Activated CD8-positive, alpha-beta T cell treated with anti-CD3 and anti-CD28 coated beads for 36 hours (primary cell): ENCODE measurements at regions of chr2 and their contacts with region 1.

Region 1: DNA sequence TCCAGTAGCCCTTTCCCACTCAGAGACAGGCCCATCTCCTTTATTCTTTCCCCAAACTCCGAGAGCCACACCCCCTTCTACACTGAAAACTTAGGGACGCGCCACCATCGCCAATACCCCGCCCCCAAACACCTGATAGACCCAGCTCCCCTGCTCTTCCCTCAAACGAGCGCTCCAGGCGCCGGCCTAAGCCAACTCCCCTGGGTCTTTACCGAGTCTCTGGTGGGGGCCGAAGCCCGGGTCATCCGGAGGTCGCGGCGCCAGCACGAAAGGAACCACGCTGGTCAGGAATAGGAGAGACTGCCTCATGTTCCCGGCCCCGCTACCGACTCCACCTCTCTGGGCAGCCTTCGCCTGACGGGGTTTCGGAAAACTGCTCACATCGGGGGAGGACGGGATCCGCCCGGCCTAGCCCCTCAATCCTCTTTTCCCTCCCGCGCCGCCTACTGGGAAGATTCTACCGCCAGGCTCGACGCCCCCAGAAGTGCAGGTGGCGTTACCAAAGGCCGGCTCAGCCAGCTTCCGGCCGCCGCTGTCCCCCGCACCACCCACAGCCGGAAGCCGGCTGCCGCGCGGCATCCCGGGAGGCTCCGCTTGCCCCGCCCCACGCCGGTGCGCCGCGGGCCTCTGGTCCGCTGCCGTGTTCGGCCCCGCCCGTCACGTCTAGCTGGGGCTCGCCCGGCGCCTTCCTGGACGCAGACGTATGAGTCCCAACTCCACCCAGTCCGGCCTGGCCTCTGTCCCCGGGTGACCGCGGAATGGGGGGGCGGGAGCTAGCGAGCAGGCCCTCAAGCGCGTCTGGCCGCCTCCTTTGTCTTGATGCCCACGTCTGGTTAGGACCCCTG is at the start of gene ADAM17:
- DNase-seq: peak; percentile 88
- ATAC-seq: peak; percentile 90
- H3K4me3 Mint-ChIP-seq: peak within 1 kb of the TSS; percentile 87
- H3K27ac Mint-ChIP-seq: peak within 1 kb of the TSS; percentile 96
- H3K4me1 Mint-ChIP-seq: peaks cover 47% of the 10 kb centered on the region
- H3K27me3 Mint-ChIP-seq: no peaks in the 10 kb centered on the region
- CTCF ChIP-seq: no peak
- total RNA-seq, gene ADAM17: 14.2 to 15.9 TPM

Region 2: GRCh38 chr2:9326975-9327374 is 228.5 kb before region 1 on chr2:
- CTCF ChIA-PET with region 1: no interaction called
- POLR2A ChIA-PET with region 1: no interaction called
- intact Hi-C with region 1: no loop called
- DNase-seq: no peak
- ATAC-seq: no peak
- H3K4me3 Mint-ChIP-seq: no peak overlapping the region
- H3K27ac Mint-ChIP-seq: no peak overlapping the region
- H3K4me1 Mint-ChIP-seq: no peaks in the 10 kb centered on the region
- H3K27me3 Mint-ChIP-seq: peaks cover 3% of the 10 kb centered on the region
- CTCF ChIP-seq: no peak

Region 3: GRCh38 chr2:9474361-9474967 is 81.1 kb before region 1 on chr2 and contains the start of gene IAH1:
- CTCF ChIA-PET with region 1: interaction called, 6 read pairs
- POLR2A ChIA-PET with region 1: interaction called, 9 read pairs
- intact Hi-C with region 1: loop called (anchors 5 kb)
- DNase-seq: peak; percentile 63
- ATAC-seq: peak; percentile 80
- H3K4me3 Mint-ChIP-seq: peak within 1 kb of the TSS; percentile 82
- H3K27ac Mint-ChIP-seq: peak within 1 kb of the TSS; percentile 83
- H3K4me1 Mint-ChIP-seq: peaks cover 40% of the 10 kb centered on the region
- H3K27me3 Mint-ChIP-seq: no peaks in the 10 kb centered on the region
- CTCF ChIP-seq: no peak
- total RNA-seq, gene IAH1: 64.9 to 67.3 TPM

Region 4: GRCh38 chr2:9527936-9528787 is 27.4 kb before region 1 on chr2:
- CTCF ChIA-PET with region 1: no interaction called
- POLR2A ChIA-PET with region 1: no interaction called
- intact Hi-C with region 1: no loop called
- DNase-seq: no peak
- ATAC-seq: no peak
- H3K4me3 Mint-ChIP-seq: no peak overlapping the region
- H3K27ac Mint-ChIP-seq: no peak overlapping the region
- H3K4me1 Mint-ChIP-seq: no peaks in the 10 kb centered on the region
- H3K27me3 Mint-ChIP-seq: no peaks in the 10 kb centered on the region
- CTCF ChIP-seq: no peak

Region 5: DNA sequence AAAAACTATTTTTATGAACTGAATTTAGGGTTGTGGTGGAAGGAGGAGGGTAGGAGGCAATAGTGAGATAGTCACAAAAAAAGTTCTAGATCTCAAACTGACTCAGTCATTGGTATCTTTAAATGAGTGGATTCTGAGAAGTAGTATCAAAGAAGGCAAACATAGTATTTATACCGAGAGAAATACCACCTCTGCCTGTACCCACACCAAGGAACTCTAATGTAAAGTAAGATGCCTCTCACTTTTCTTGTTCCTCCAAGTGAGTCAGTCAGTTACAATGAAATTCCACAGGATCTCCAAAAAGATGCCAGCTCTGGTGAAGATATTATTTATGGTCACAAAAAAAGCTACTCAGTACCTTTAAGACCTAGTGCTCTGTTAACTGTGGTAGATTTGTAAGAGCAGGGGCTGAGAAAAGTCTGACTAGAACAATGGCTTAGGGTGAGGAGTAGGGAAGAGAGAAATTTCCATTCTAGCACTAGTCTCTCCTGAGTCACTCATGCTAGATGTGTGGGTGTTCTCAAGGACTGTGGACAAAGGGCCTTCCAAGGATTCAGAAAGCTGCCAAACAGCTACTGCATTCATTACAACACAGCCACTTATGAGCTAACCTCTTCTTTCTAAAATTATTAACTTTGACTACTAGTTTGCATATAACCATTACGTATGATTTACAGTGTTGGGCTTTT is 39.0 kb after region 1 on chr2:
- CTCF ChIA-PET with region 1: interaction called, 13 read pairs
- POLR2A ChIA-PET with region 1: interaction called, 16 read pairs
- intact Hi-C with region 1: loop called (anchors 5 kb)
- DNase-seq: peak; percentile 27
- ATAC-seq: peak; percentile 86
- H3K4me3 Mint-ChIP-seq: peak overlapping the region; percentile 27
- H3K27ac Mint-ChIP-seq: peak overlapping the region; percentile 83
- H3K4me1 Mint-ChIP-seq: peaks cover 80% of the 10 kb centered on the region
- H3K27me3 Mint-ChIP-seq: no peaks in the 10 kb centered on the region
- CTCF ChIP-seq: no peak

Region 6: GRCh38 chr2:9613291-9613690 is 57.8 kb after region 1 on chr2:
- CTCF ChIA-PET with region 1: interaction called, 3 read pairs
- POLR2A ChIA-PET with region 1: interaction called, 16 read pairs
- intact Hi-C with region 1: no loop called
- DNase-seq: no peak
- ATAC-seq: no peak
- H3K4me3 Mint-ChIP-seq: no peak overlapping the region
- H3K27ac Mint-ChIP-seq: no peak overlapping the region
- H3K4me1 Mint-ChIP-seq: peaks cover 86% of the 10 kb centered on the region
- H3K27me3 Mint-ChIP-seq: no peaks in the 10 kb centered on the region
- CTCF ChIP-seq: no peak

Region 7: GRCh38 chr2:9753276-9753600 is 197.7 kb after region 1 on chr2:
- CTCF ChIA-PET with region 1: interaction called, 3 read pairs
- POLR2A ChIA-PET with region 1: interaction called, 11 read pairs
- intact Hi-C with region 1: no loop called
- DNase-seq: peak; percentile 82
- ATAC-seq: peak; percentile 82
- H3K4me3 Mint-ChIP-seq: peak overlapping the region; percentile 32
- H3K27ac Mint-ChIP-seq: peak overlapping the region; percentile 81
- H3K4me1 Mint-ChIP-seq: peaks cover 54% of the 10 kb centered on the region
- H3K27me3 Mint-ChIP-seq: peaks cover 28% of the 10 kb centered on the region
- CTCF ChIP-seq: no peak